Psoas muscle (tissue), 8 donors: ENCODE measurements at regions of chr19 and their contacts with region 1.

Region 1: GRCh38 chr19:33476213-33476612 is 45.4 kb downstream of the PEPD start:
- DNase-seq: no peak
- ATAC-seq: no peak
- H3K4me3 ChIP-seq: no peak overlapping the region
- H3K27ac ChIP-seq: no peak overlapping the region
- H3K4me1 ChIP-seq: peaks cover 11% of the 10 kb centered on the region
- H3K27me3 ChIP-seq: no peaks in the 10 kb centered on the region
- CTCF ChIP-seq: no peak

Region 2: GRCh38 chr19:33553530-33554310 is 77.5 kb after region 1 on chr19:
- intact Hi-C with region 1: loop called in 1 of 2 experiments (anchors 2 kb)
- DNase-seq: no peak
- ATAC-seq: no peak
- H3K4me3 ChIP-seq: no peak overlapping the region
- H3K27ac ChIP-seq: no peak overlapping the region
- H3K4me1 ChIP-seq: peaks cover 7% of the 10 kb centered on the region
- H3K27me3 ChIP-seq: no peaks in the 10 kb centered on the region
- CTCF ChIP-seq: no peak